ENCODE measurements at regions of chr14 and their contacts with region 1.

Region 1: GRCh38 chr14:104976198-104977007 is 1.8 kb downstream of the AHNAK2 start:
- DNase-seq: peak; percentile 91
- H3K4me3 Mint-ChIP-seq: peak overlapping the region; percentile 34
- H3K27ac Mint-ChIP-seq: peak overlapping the region; percentile 39
- H3K4me1 Mint-ChIP-seq: peaks cover 10% of the 10 kb centered on the region
- H3K27me3 Mint-ChIP-seq: peaks cover 25% of the 10 kb centered on the region

Region 2: GRCh38 chr14:104494483-104494882 is 481.9 kb before region 1 on chr14:
- CTCF ChIA-PET with region 1: no interaction called
- POLR2A ChIA-PET with region 1: no interaction called
- intact Hi-C with region 1: no loop called
- DNase-seq: no peak
- H3K4me3 Mint-ChIP-seq: no peak overlapping the region
- H3K27ac Mint-ChIP-seq: no peak overlapping the region
- H3K4me1 Mint-ChIP-seq: peaks cover 10% of the 10 kb centered on the region
- H3K27me3 Mint-ChIP-seq: peaks cover 6% of the 10 kb centered on the region

Region 3: DNA sequence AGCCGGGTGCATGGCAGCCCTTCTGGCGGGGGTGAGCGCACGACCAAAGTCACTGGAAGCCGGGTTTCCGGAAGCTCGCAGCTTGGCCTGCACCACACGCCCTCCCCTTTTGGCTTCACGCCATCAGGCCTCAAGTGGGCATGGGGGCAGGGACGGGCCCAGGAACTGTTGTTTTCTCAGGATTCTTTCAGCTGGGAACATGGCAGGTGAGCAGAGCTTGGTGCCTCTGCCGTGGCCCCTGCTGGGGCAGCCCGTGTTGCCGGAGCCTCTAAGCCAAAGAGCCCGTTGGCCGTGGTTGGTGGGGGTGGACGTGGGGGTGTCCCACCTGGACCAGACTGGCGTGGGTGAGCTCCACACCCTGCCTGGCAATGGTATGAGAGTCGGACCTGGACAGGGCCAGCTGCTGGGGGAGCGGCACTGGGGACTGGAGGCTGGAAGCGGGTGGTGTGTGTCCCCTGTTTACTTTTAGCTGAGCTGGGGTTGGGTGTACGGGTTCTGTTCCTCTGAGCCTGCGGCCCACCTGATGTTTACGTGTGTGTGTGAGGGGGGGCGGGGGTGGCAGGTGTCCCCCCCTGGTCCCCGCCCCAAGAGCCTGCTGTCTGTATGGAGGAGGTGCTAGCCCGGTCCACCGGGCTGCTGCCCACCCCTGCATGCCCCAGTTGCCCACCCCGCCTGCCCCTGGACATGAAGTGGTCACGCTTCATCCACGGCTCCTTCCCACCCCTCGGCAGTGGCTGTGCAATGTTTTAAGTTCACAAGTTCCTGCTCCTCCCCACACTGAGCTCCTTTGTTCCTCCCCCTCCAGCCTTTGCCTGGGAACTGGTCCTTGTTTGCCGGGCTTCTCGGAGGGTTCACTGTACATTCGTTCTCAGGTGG is 80.4 kb before region 1 on chr14:
- CTCF ChIA-PET with region 1: no interaction called
- POLR2A ChIA-PET with region 1: no interaction called
- intact Hi-C with region 1: loop called (anchors 5 kb)
- DNase-seq: no peak
- H3K4me3 Mint-ChIP-seq: no peak overlapping the region
- H3K27ac Mint-ChIP-seq: no peak overlapping the region
- H3K4me1 Mint-ChIP-seq: peaks cover 5% of the 10 kb centered on the region
- H3K27me3 Mint-ChIP-seq: peaks cover 1% of the 10 kb centered on the region

Region 4: DNA sequence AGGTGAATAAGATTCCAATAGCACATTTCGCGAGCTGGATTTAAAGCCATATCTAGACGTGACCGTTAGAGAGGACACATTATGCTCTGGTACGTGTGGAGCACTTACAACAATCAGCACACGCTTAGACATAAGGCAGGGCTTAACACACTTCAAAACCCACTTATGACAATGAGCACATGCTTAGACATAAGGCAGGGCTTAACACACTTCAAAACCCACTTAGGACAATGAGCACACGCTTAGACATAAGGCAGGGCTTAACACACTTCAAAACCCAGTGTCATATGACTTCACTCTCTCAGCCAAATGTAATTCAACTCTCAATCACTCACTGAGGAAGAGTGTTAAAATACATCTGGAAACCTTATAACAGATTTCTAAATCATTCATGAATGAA is 63.0 kb before region 1 on chr14:
- CTCF ChIA-PET with region 1: no interaction called
- POLR2A ChIA-PET with region 1: no interaction called
- intact Hi-C with region 1: no loop called
- DNase-seq: no peak
- H3K4me3 Mint-ChIP-seq: no peak overlapping the region
- H3K27ac Mint-ChIP-seq: no peak overlapping the region
- H3K4me1 Mint-ChIP-seq: no peaks in the 10 kb centered on the region
- H3K27me3 Mint-ChIP-seq: peaks cover 16% of the 10 kb centered on the region

Region 5: GRCh38 chr14:104993808-104994591 is 17.6 kb after region 1 on chr14:
- CTCF ChIA-PET with region 1: interaction called, 10 read pairs
- POLR2A ChIA-PET with region 1: no interaction called
- intact Hi-C with region 1: no loop called
- DNase-seq: no peak
- H3K4me3 Mint-ChIP-seq: no peak overlapping the region
- H3K27ac Mint-ChIP-seq: peak overlapping the region; percentile 56
- H3K4me1 Mint-ChIP-seq: no peaks in the 10 kb centered on the region
- H3K27me3 Mint-ChIP-seq: no peaks in the 10 kb centered on the region